PC-9 (cell line): ENCODE measurements at regions of chr11 and their contacts with region 1.

Region 1: GRCh38 chr11:47578524-47579460 is at the starts of genes KBTBD4 and NDUFS3:
- DNase-seq: peak; percentile 79 to 89
- H3K4me3 ChIP-seq: peak within 1 kb of the TSS; percentile 80
- H3K27ac ChIP-seq: peak within 1 kb of the TSS; percentile 45; the same call in 1 of the 2 replicates
- H3K4me1 ChIP-seq: peaks cover 12% of the 10 kb centered on the region
- H3K27me3 ChIP-seq: no peaks in the 10 kb centered on the region
- CTCF ChIP-seq: no peak
- total RNA-seq, gene KBTBD4: 20.2 and 20.3 TPM in 2 replicates
- total RNA-seq, gene NDUFS3: 119 and 140 TPM in 2 replicates

Region 2: GRCh38 chr11:47392546-47393149 is 186.1 kb before region 1 on chr11:
- CTCF ChIA-PET with region 1: no interaction called
- POLR2A ChIA-PET with region 1: interaction called, 16 read pairs
- intact Hi-C with region 1: no loop called
- DNase-seq: peak in 1 of 2 experiments; percentile 32
- H3K4me3 ChIP-seq: no peak overlapping the region
- H3K27ac ChIP-seq: no peak overlapping the region
- H3K4me1 ChIP-seq: no peaks in the 10 kb centered on the region
- H3K27me3 ChIP-seq: no peaks in the 10 kb centered on the region
- CTCF ChIP-seq: no peak

Region 3: DNA sequence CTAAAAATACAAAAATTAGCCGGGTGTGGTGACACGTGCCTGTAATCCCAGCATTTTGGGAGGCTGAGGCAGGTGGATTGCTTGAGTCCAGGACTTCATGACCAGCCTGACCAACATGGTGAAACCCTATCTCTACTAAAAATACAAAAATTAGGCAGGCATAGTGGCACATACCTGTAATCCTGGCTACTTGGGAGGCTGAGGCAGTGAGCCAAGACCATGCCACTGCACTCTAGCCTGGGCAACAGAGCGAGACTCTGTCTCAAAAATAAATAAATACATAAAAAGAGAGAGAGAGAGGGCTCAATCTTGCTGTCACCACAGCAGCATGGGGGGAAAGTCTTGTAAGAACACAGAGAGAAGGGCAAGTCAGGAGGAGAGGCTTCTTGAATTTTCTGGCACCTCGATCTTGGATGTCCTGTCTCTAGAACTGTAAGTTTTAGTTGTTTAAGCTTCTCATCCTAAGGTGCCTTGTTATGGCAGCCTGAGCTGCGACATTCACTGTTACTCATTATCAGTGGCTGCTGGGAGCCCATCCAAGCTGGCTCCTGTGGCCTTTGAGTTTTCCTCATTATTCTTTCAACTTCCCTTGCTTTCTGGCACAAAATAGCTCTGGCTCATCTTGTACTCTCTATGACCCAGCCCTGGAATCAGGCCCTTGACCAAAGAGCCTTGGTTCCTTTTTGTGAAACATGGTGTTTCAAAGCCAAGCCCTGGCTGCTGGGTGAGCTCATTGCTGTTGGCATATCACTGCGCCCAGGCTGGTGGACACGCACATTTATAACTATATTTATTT is 144.6 kb before region 1 on chr11:
- CTCF ChIA-PET with region 1: no interaction called
- POLR2A ChIA-PET with region 1: no interaction called
- intact Hi-C with region 1: no loop called
- DNase-seq: no peak
- H3K4me3 ChIP-seq: no peak overlapping the region
- H3K27ac ChIP-seq: no peak overlapping the region
- H3K4me1 ChIP-seq: no peaks in the 10 kb centered on the region
- H3K27me3 ChIP-seq: no peaks in the 10 kb centered on the region
- CTCF ChIP-seq: no peak

Region 4: GRCh38 chr11:47724041-47724729 is 145.4 kb after region 1 on chr11:
- CTCF ChIA-PET with region 1: no interaction called
- POLR2A ChIA-PET with region 1: no interaction called
- intact Hi-C with region 1: no loop called
- DNase-seq: peak in 1 of 2 experiments; percentile 68
- H3K4me3 ChIP-seq: no peak overlapping the region
- H3K27ac ChIP-seq: no peak overlapping the region
- H3K4me1 ChIP-seq: no peaks in the 10 kb centered on the region
- H3K27me3 ChIP-seq: no peaks in the 10 kb centered on the region
- CTCF ChIP-seq: no peak

Region 5: GRCh38 chr11:48043111-48043990 is 464.6 kb after region 1 on chr11:
- CTCF ChIA-PET with region 1: no interaction called
- POLR2A ChIA-PET with region 1: no interaction called
- intact Hi-C with region 1: no loop called
- DNase-seq: peak in 1 of 2 experiments; percentile 1
- H3K4me3 ChIP-seq: no peak overlapping the region
- H3K27ac ChIP-seq: no peak overlapping the region
- H3K4me1 ChIP-seq: peaks cover 17% of the 10 kb centered on the region; the same call in 1 of the 2 replicates
- H3K27me3 ChIP-seq: no peaks in the 10 kb centered on the region
- CTCF ChIP-seq: no peak